ENCODE measurements at regions of chr1 and their contacts with region 1.

Region 1: GRCh38 chr1:111582644-111583618 is 36.7 kb upstream of the RAP1A start:
- DNase-seq: no peak
- ATAC-seq: peak; percentile 39

Region 2: GRCh38 chr1:109969146-109969829 is 1613.6 kb before region 1 on chr1:
- intact Hi-C with region 1: loop called (anchors 5 kb)
- DNase-seq: no peak
- ATAC-seq: no peak

Measured in sciatic nerve (tissue), 2 donors.